ENCODE measurements at regions of chr19 and their contacts with region 1.

Region 1: GRCh38 chr19:55599468-55600279 is at the start of gene FIZ1:
- DNase-seq: peak; percentile 99
- H3K4me3 ChIP-seq: peak within 1 kb of the TSS; percentile 70
- H3K4me3 Mint-ChIP-seq: peak within 1 kb of the TSS; percentile 87
- H3K27ac Mint-ChIP-seq: peak within 1 kb of the TSS; percentile 98
- H3K4me1 ChIP-seq: peaks cover 5% of the 10 kb centered on the region
- H3K4me1 Mint-ChIP-seq: peaks cover 14% of the 10 kb centered on the region
- H3K27me3 ChIP-seq: no peaks in the 10 kb centered on the region
- H3K27me3 Mint-ChIP-seq: no peaks in the 10 kb centered on the region
- CTCF ChIP-seq: no peak
- total RNA-seq, gene FIZ1: 27.2 and 27.7 TPM in 2 replicates

Region 2: DNA sequence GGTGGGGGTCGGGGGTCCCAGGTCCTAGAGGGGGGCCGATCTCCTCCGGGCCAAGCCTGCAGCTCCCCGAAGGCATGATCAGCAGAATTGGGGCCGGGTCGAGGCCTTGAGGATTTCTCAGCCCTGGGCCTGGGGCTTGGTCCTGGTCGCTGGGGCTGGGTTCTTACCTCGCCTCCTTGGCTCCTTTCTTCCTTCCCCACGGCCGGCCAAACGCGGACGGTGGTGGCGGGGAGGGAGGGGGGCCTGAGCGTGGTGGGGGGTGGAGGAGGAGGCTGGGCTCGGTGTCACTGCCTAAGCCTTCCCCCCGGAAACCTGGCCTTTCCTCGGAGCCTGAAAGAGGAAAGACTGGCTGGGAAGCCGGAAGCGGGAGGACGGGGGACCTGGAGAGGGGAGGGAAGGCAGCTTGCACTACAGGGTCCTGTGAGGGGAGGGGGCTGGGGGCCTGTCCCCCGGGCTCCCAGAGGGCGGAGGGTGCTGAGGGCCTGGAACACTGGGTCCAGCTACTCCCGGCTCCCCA is 19.0 kb before region 1 on chr19 and contains the start of gene ZNF579:
- CTCF ChIA-PET with region 1: interaction called, 16 read pairs
- POLR2A ChIA-PET with region 1: interaction called, 27 read pairs
- intact Hi-C with region 1: loop called (anchors 1 kb)
- DNase-seq: peak; percentile 93
- H3K4me3 ChIP-seq: peak within 1 kb of the TSS; percentile 68
- H3K4me3 Mint-ChIP-seq: peak within 1 kb of the TSS; percentile 85
- H3K27ac Mint-ChIP-seq: peak within 1 kb of the TSS; percentile 46
- H3K4me1 ChIP-seq: peaks cover 19% of the 10 kb centered on the region
- H3K4me1 Mint-ChIP-seq: peaks cover 27% of the 10 kb centered on the region
- H3K27me3 ChIP-seq: no peaks in the 10 kb centered on the region
- H3K27me3 Mint-ChIP-seq: no peaks in the 10 kb centered on the region
- CTCF ChIP-seq: no peak
- total RNA-seq, gene ZNF579: 26.5 and 30.4 TPM in 2 replicates

Region 3: DNA sequence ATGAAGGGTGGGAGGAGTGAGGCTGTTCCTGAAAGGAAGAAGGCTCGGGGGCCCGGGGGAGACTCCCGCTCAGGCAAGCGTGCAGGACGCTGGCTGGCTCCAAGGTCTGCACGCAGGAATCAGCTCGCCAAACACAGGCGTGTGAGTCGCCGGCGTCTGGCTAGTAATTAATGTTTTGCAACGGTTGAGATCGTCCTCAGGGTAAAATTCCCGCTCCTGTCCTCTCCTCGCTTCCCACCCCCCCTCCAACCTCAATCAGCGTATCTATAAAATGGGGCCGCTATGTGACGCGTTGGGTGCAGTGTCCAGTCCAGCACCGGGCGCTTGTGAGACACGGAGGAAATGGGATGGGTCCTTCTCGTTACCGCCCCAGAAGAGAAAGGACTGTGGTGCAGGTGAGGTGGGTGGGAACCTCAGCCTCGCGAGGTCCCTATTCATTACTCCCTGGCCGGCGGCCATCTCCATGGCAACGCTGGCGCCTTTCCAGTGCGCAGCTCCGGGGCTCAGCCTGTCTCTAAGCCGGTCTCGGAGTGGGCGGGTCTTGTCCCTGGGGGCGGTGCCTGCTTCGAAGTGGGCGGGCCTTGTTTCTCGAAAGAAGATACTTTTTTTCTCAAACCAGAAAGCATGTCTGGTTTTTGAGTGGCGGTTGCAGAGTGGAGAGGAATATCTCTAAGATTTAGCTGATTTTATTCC is 12.6 kb before region 1 on chr19:
- CTCF ChIA-PET with region 1: interaction called, 16 read pairs
- POLR2A ChIA-PET with region 1: interaction called, 27 read pairs
- intact Hi-C with region 1: loop called (anchors 1 kb)
- DNase-seq: peak; percentile 98
- H3K4me3 ChIP-seq: peak overlapping the region; percentile 42
- H3K4me3 Mint-ChIP-seq: peak overlapping the region; percentile 75
- H3K27ac Mint-ChIP-seq: peak overlapping the region; percentile 81
- H3K4me1 ChIP-seq: peaks cover 11% of the 10 kb centered on the region
- H3K4me1 Mint-ChIP-seq: peaks cover 16% of the 10 kb centered on the region
- H3K27me3 ChIP-seq: no peaks in the 10 kb centered on the region
- H3K27me3 Mint-ChIP-seq: no peaks in the 10 kb centered on the region
- CTCF ChIP-seq: no peak

Region 4: DNA sequence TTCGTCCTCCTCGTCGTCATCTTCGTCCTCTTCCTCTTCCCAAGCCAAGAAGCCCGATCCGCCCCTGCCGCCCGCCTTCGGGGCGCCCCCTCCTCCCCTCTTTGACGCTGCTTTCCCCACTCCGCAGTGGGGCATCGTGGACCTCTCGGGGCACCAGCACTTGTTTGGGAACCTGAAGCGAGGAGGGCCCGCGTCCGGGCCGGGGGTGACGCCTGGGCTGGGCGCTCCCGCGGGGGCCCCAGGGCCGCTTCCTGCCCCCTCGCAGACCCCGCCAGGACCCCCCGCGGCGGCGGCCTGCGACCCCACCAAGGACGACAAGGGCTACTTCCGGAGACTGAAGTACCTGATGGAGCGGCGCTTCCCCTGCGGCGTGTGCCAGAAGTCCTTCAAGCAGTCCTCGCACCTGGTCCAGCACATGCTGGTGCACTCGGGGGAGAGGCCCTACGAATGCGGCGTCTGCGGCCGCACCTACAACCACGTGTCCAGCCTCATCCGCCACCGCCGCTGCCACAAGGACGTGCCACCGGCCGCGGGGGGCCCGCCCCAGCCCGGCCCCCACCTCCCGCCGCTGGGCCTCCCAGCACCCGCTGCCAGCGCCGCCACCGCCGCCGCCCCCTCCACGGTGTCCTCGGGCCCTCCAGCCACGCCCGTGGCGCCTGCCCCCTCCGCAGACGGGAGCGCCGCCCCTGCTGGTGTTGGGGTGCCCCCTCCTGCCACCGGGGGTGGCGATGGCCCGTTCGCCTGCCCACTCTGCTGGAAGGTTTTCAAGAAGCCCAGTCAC is 14.4 kb after region 1 on chr19:
- CTCF ChIA-PET with region 1: no interaction called
- POLR2A ChIA-PET with region 1: no interaction called
- intact Hi-C with region 1: no loop called
- DNase-seq: no peak
- H3K4me3 ChIP-seq: no peak overlapping the region
- H3K4me3 Mint-ChIP-seq: no peak overlapping the region
- H3K27ac Mint-ChIP-seq: no peak overlapping the region
- H3K4me1 ChIP-seq: no peaks in the 10 kb centered on the region
- H3K4me1 Mint-ChIP-seq: no peaks in the 10 kb centered on the region
- H3K27me3 ChIP-seq: no peaks in the 10 kb centered on the region
- H3K27me3 Mint-ChIP-seq: no peaks in the 10 kb centered on the region
- CTCF ChIP-seq: no peak

Region 5: DNA sequence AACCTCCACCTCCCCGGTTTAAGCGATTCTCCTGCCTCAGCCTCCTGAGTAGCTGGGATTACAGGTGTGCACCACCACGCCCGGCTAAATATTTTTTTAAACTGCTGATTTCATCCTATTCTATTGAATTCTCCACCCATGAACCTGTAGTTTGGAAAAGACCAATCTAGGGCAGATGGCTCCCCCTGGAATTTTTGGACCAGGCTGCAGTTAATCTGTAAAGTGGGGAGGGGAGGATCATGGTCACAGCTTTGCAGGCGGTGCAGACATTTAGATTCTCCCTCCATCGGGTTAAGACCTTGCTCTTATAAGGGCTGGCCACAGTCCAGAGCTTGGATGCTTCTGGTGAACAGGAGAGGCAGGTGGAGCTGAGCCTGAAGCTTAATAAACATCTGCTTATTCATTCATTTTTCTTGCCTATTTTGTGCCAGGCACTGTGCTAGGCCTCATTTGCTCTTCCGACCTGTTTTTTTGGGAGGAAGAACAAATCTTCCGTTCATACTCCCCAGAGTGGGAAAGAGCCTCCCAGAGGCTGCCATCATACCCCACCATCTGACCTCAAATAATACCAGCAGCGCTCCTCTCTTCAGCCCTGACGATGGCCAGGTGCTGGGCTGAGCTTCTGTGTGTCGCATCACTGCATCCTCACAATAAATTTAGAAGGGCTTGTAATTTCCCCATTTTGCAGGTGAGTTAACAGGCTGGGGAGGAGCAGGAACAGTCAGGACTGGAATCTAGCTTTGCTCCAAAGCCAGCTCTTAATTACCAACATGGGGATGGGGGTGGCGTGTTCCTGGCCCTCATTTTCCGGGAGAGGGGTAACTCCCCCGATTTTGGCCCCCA is 47.4 kb after region 1 on chr19:
- CTCF ChIA-PET with region 1: no interaction called
- POLR2A ChIA-PET with region 1: no interaction called
- intact Hi-C with region 1: no loop called
- DNase-seq: no peak
- H3K4me3 ChIP-seq: peak overlapping the region; percentile 93
- H3K4me3 Mint-ChIP-seq: peak overlapping the region; percentile 82
- H3K27ac Mint-ChIP-seq: peak overlapping the region; percentile 76
- H3K4me1 ChIP-seq: peaks cover 3% of the 10 kb centered on the region; the same call in 1 of the 2 replicates
- H3K4me1 Mint-ChIP-seq: peaks cover 21% of the 10 kb centered on the region
- H3K27me3 ChIP-seq: no peaks in the 10 kb centered on the region
- H3K27me3 Mint-ChIP-seq: no peaks in the 10 kb centered on the region
- CTCF ChIP-seq: no peak

Measured in Caco-2 (cell line).